H1 (cell line): ENCODE measurements at regions of chr17 and their contacts with region 1.

Region 1: GRCh38 chr17:5097101-5097834 is 14.4 kb downstream of the ZNF232 start:
- DNase-seq: peak; percentile 69 to 91
- H3K4me3 ChIP-seq: peak overlapping the region; percentile 59 to 79 (median 64)
- H3K27ac ChIP-seq: no peak overlapping the region
- H3K4me1 ChIP-seq: no peaks in the 10 kb centered on the region
- H3K27me3 ChIP-seq: peaks cover 0 to 15% (median 9%) of the 10 kb centered on the region in 4 experiments; a peak in 6 of 7 replicates
- CTCF ChIP-seq: no peak
- EP300 ChIP-seq: no peak
- POLR2A ChIP-seq: no peak; a peak in 1 of 3 replicates
- RAD21 ChIP-seq: 0 out of 4 replicates have a peak, but pooled peaks of 1 of the 2 experiments have one; percentile 10

Region 2: DNA sequence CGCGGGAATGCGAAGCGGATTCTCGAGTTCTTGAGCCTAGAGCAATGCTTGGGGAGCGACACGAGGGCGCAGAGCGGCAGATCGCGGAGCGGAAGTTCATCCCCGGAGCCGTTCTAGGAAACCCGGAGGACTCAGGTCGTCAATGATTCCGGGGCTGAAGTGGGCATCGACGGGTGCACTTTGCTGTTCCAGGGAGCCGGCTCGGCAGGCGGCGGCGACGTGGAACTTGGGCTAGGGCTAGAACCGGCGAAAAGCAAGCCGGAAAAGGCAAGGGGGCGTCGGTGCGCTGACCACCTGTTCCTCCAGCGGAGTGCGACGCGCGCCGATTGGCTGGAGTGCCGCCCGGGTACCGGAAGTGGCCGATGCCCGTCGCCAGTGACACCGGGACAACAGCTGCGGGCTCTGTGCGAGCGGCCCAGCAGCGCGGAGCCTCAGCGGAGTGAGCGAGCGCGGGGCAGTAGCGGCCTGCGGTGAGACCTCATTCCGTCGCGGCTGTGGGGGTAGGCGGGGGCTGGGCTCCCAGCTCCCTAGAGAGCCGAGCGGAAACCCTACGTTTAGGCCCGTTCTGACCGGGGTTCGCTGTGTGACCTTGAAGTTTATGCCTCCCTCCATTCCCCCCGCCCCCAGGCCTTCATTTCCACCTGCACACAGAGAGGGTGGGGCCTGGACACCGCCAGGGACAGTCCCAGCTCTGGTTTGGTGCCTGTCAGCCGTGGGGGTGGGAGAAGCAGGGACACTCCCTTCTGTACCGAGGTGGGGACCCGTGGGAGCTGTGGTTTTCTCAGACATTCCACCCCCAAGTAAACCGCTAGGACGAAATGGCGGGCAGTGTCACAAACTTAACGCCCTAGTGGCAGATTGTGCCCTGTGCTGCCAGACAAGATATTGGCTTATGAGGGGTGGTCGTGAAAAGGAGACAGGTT is 18.9 kb before region 1 on chr17 and contains the start of gene ZFP3:
- CTCF ChIA-PET with region 1: no interaction called
- POLR2A ChIA-PET with region 1: interaction called, 12 read pairs
- DNase-seq: peak; percentile 10 to 61
- H3K4me3 ChIP-seq: peak within 1 kb of the TSS; percentile 14 to 53 (median 26); a peak in 7 of 8 replicates
- H3K27ac ChIP-seq: no peak within 1 kb of the TSS
- H3K4me1 ChIP-seq: no peaks in the 10 kb centered on the region; a peak in 1 of 7 replicates
- H3K27me3 ChIP-seq: peaks cover 0 to 13% (median 8%) of the 10 kb centered on the region in 4 experiments; a peak in 5 of 7 replicates
- CTCF ChIP-seq: peak in 1 of 3 experiments; percentile 14; a peak in 1 of 4 replicates
- EP300 ChIP-seq: no peak
- POLR2A ChIP-seq: no peak
- RAD21 ChIP-seq: no peak
- total RNA-seq, gene ZFP3: 0.15 and 0.17 TPM in 2 replicates